ENCODE measurements at regions of chr16 and their contacts with region 1.

Region 1: GRCh38 chr16:4253394-4254150 is 11.7 kb upstream of the SRL start:
- DNase-seq: peak; percentile 93 to 100
- H3K4me3 ChIP-seq: peak overlapping the region; percentile 83
- H3K27ac ChIP-seq: peak overlapping the region; percentile 61
- H3K4me1 ChIP-seq: no peaks in the 10 kb centered on the region
- H3K27me3 ChIP-seq: no peaks in the 10 kb centered on the region
- CTCF ChIP-seq: no peak

Region 2: GRCh38 chr16:3880623-3881498 is 372.7 kb before region 1 on chr16 and contains the start of gene CREBBP:
- CTCF ChIA-PET with region 1: no interaction called
- POLR2A ChIA-PET with region 1: interaction called, 4 read pairs
- intact Hi-C with region 1: loop called (anchors 10 kb)
- DNase-seq: peak; percentile 64 to 91
- H3K4me3 ChIP-seq: peak within 1 kb of the TSS; percentile 92
- H3K27ac ChIP-seq: peak within 1 kb of the TSS; percentile 26; the same call in 1 of the 2 replicates
- H3K4me1 ChIP-seq: peaks cover 17% of the 10 kb centered on the region
- H3K27me3 ChIP-seq: no peaks in the 10 kb centered on the region
- CTCF ChIP-seq: no peak
- total RNA-seq, gene CREBBP: 70.5 and 74.9 TPM in 2 replicates

Region 3: DNA sequence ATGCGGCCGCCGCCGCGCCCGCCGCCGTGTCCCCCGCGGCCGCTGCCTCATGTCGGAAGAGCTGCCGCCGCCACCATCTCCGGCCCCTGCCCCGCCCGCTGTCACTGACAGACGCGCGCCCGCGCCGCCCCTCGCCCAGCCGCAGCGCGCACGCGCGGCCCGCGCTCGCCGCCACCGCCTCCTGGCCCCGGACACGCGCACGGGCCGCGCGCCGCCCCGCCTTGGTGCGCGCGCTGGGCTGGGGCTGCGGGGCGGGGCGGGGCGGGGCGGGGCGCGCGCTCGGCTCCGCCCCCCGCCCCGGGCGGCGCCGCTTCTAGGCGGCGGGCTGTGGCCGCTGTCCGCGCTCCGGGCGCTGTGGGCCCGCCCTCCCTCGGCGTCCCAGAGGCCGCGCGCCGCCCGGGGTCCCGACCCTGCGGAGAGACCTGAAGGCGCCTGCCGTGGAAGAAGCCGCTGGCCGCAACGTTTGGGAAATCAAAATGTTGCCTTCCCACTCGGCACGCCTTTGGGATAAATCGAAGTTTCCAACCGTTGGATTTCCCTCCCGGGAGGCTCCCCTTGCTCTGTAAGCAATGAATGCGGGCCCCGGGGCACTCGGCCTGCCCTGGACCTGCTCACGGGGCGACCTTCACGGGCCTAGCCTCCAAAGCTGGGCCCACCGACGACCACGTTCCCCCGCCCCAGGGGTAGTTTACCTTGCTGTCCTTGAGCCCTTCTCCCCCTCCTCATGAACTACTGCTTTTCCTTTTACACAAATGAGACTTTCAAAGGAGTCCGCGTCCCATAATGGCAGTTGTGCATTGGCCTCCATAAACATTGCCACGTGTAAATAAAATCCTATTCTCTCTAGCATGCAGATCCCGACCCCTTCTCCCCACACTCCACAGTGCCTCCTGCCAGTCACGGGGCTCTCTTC is 137.0 kb before region 1 on chr16 and contains the start of gene ADCY9:
- CTCF ChIA-PET with region 1: no interaction called
- POLR2A ChIA-PET with region 1: no interaction called
- intact Hi-C with region 1: loop called (anchors 2 kb)
- DNase-seq: peak in 1 of 2 experiments; percentile 82
- H3K4me3 ChIP-seq: peak within 1 kb of the TSS; percentile 56; the same call in 1 of the 2 replicates
- H3K27ac ChIP-seq: no peak within 1 kb of the TSS
- H3K4me1 ChIP-seq: no peaks in the 10 kb centered on the region
- H3K27me3 ChIP-seq: no peaks in the 10 kb centered on the region
- CTCF ChIP-seq: no peak
- total RNA-seq, gene ADCY9: 9.8 and 10.5 TPM in 2 replicates

Region 4: GRCh38 chr16:4183237-4184036 is 70.1 kb before region 1 on chr16:
- CTCF ChIA-PET with region 1: no interaction called
- POLR2A ChIA-PET with region 1: interaction called, 3 read pairs
- intact Hi-C with region 1: loop called (anchors 1 kb)
- DNase-seq: peak; percentile 92 to 97
- H3K4me3 ChIP-seq: peak overlapping the region; percentile 80
- H3K27ac ChIP-seq: peak overlapping the region; percentile 95
- H3K4me1 ChIP-seq: peaks cover 23% of the 10 kb centered on the region
- H3K27me3 ChIP-seq: no peaks in the 10 kb centered on the region
- CTCF ChIP-seq: no peak

Region 5: GRCh38 chr16:4232541-4233386 is 20.8 kb before region 1 on chr16:
- CTCF ChIA-PET with region 1: interaction called, 11 read pairs
- POLR2A ChIA-PET with region 1: no interaction called
- intact Hi-C with region 1: no loop called
- DNase-seq: no peak
- H3K4me3 ChIP-seq: no peak overlapping the region
- H3K27ac ChIP-seq: no peak overlapping the region
- H3K4me1 ChIP-seq: no peaks in the 10 kb centered on the region
- H3K27me3 ChIP-seq: peaks cover 17% of the 10 kb centered on the region; the same call in 1 of the 2 replicates
- CTCF ChIP-seq: no peak

Region 6: GRCh38 chr16:4936991-4937781 is 683.6 kb after region 1 on chr16 and contains the start of gene PPL:
- CTCF ChIA-PET with region 1: interaction called, 13 read pairs
- POLR2A ChIA-PET with region 1: no interaction called
- intact Hi-C with region 1: no loop called
- DNase-seq: peak; percentile 87 to 100
- H3K4me3 ChIP-seq: peak within 1 kb of the TSS; percentile 99
- H3K27ac ChIP-seq: peak within 1 kb of the TSS; percentile 38; the same call in 1 of the 2 replicates
- H3K4me1 ChIP-seq: peaks cover 36% of the 10 kb centered on the region
- H3K27me3 ChIP-seq: no peaks in the 10 kb centered on the region
- CTCF ChIP-seq: no peak
- total RNA-seq, gene PPL: 184 and 187 TPM in 2 replicates